ENCODE measurements at regions of chr1 and their contacts with region 1.

Region 1: DNA sequence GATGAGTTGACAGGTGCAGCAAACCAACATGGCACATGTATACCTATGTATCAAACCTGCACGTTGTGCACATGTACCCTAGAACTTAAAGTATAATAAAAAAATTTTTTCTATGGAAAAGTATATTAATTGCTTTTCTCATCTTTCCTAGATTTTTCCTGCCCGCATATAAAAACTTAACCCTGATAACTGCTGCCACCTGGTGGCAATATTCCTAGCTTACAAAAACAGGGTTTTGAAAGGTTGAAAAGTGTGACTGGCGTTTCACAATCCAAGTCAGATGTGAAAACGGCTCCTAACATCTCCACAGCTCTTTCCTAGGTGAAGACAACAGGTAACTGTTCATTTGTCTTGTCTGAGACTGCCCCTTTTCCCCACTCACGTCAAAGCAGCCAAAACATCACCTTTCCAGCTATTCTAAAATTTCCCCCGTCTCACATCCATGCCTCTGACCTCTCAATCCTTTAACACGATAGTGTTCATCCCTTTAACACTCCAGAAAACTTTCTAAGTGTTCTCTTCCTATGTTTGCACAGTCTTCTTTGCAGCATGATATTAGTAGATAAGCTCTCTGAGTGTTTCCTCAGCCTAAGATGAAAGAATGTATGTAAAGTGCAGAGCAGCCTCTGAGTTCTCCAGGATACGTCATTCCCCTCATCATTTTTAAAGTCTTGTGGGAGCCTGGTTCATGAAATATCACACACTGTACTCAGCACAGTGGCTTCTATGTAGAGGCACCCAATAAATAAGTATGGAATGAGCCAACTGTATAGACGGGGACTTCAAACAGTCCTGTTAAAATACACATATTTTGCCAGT is 27.5 kb downstream of the OVGP1 start:
- DNase-seq: peak; percentile 15
- ATAC-seq: peak; percentile 44; the same call in 2 of the 3 replicates
- H3K4me3 ChIP-seq: no peak overlapping the region
- H3K27ac ChIP-seq: no peak overlapping the region
- H3K4me1 ChIP-seq: no peaks in the 10 kb centered on the region
- H3K27me3 ChIP-seq: no peaks in the 10 kb centered on the region
- CTCF ChIP-seq: peak; percentile 60 to 64 (median 60)
- EP300 ChIP-seq: no peak
- POLR2A ChIP-seq: no peak
- RAD21 ChIP-seq: peak; percentile 86

Region 2: DNA sequence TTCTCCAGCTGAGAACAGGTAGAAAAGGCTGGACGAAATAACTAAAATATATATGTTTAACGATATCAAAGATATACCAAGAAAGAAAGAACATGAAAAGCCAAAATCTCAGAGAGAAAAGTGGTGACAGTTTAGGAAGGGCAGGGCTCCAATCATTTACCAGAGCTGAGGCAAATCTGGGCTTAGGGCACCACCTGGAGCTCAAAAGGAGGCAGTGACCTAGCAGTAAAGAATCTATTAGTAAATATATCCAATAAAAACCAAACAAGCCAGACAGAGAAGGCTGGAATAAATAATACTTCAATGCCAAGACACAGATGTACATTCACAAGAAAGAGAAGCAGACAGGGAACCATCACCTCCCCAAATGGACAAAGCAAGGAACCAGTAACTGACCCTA is 65.8 kb before region 1 on chr1:
- CTCF ChIA-PET with region 1: interaction called, 9 read pairs
- POLR2A ChIA-PET with region 1: no interaction called
- RAD21 ChIA-PET with region 1: no interaction called
- SMC1A ChIA-PET with region 1: interaction called, 11 read pairs
- in situ Hi-C with region 1: no loop called
- intact Hi-C with region 1: no loop called
- DNase-seq: peak; percentile 33
- ATAC-seq: peak; percentile 85
- H3K4me3 ChIP-seq: no peak overlapping the region
- H3K27ac ChIP-seq: no peak overlapping the region
- H3K4me1 ChIP-seq: peaks cover 17% of the 10 kb centered on the region
- H3K27me3 ChIP-seq: no peaks in the 10 kb centered on the region
- CTCF ChIP-seq: peak; percentile 61 to 75 (median 73); a peak in 5 of 6 replicates
- EP300 ChIP-seq: no peak
- POLR2A ChIP-seq: no peak
- RAD21 ChIP-seq: peak; percentile 95

Region 3: DNA sequence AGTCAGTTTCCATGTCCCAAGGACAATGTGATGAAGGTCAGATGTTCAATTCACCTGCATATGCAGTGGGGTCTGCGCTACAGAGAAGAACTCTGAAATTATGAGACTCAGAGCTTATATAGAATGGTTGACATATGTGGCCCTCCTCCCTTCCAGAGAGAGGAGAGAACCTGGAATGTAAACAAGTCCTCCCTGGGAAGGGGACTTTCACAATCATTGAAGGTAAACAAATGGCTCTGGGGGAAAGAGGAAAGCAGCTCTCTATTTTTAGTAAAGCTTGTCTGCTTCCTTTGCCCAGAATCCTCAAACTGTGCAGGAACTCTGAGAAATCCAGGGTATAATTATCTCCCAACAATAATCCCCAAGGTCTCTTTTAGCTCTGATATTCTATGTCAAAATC is 17.8 kb after region 1 on chr1:
- CTCF ChIA-PET with region 1: interaction called, 41 read pairs
- POLR2A ChIA-PET with region 1: no interaction called
- RAD21 ChIA-PET with region 1: interaction called, 3 read pairs
- SMC1A ChIA-PET with region 1: interaction called, 9 read pairs
- in situ Hi-C with region 1: no loop called
- intact Hi-C with region 1: no loop called
- DNase-seq: no peak
- ATAC-seq: no peak
- H3K4me3 ChIP-seq: no peak overlapping the region
- H3K27ac ChIP-seq: no peak overlapping the region
- H3K4me1 ChIP-seq: no peaks in the 10 kb centered on the region
- H3K27me3 ChIP-seq: no peaks in the 10 kb centered on the region
- CTCF ChIP-seq: no peak
- EP300 ChIP-seq: no peak
- POLR2A ChIP-seq: no peak
- RAD21 ChIP-seq: no peak

Region 4: GRCh38 chr1:111769517-111770146 is 369.6 kb after region 1 on chr1:
- CTCF ChIA-PET with region 1: interaction called, 19 read pairs
- POLR2A ChIA-PET with region 1: no interaction called
- RAD21 ChIA-PET with region 1: interaction called, 10 read pairs
- SMC1A ChIA-PET with region 1: interaction called, 9 read pairs
- in situ Hi-C with region 1: no loop called
- intact Hi-C with region 1: loop called (anchors 10 kb)
- DNase-seq: peak; percentile 44
- ATAC-seq: peak; percentile 79
- H3K4me3 ChIP-seq: no peak overlapping the region
- H3K27ac ChIP-seq: no peak overlapping the region
- H3K4me1 ChIP-seq: no peaks in the 10 kb centered on the region
- H3K27me3 ChIP-seq: no peaks in the 10 kb centered on the region
- CTCF ChIP-seq: peak; percentile 66 to 87 (median 78)
- EP300 ChIP-seq: no peak
- POLR2A ChIP-seq: no peak
- RAD21 ChIP-seq: peak; percentile 92